Activated CD8-positive, alpha-beta T cell treated with anti-CD3 and anti-CD28 coated beads for 36 hours (primary cell): ENCODE measurements at regions of chr1 and their contacts with region 1.

Region 1: DNA sequence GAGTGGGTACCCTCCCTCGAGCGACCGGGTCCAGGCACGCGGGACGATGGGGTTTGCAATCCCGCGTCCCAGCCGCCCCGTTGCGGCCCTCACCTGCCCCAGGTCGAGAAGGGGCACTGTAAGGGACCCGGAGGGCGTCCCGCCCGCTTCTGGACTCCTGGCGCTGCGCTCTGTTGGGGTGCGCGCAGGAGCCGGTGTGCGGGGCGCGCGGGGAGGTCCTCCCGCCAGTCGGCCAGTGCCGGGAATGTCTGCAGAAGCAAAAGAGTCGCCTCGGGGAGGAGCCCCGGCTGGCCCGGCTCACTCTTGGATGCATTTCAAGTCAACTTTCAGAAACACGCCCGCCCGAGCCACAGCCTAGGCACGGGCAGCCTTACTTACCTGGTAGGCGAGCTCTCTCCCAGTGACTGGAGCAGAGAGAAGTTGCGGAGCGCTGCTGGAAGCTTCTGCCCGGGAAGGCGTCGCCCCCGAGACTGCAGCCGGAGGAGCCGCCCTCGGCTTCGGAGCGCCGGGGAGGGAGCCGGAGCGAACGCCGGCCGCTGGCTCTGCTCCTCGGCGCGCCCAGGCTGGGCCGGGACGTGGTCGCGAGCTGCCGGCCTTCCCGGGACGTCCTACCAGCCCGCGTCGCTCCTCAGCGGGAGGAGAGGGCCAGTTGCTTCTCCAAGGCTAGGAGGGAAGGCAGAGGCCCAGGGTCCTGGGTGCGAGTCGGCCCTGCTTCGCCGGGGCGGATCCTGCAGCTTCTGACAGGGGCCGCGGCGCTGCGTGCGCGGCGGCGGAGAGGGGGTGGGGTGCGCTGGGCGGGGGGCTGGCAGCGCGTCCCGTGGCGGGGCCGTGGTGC is at the start of gene LMX1A:
- DNase-seq: no peak
- ATAC-seq: no peak
- H3K4me3 Mint-ChIP-seq: no peak within 1 kb of the TSS
- H3K27ac Mint-ChIP-seq: no peak within 1 kb of the TSS
- H3K4me1 Mint-ChIP-seq: peaks cover 5% of the 10 kb centered on the region
- H3K27me3 Mint-ChIP-seq: peaks cover 74% of the 10 kb centered on the region
- CTCF ChIP-seq: no peak
- total RNA-seq, gene LMX1A: not detected

Region 2: DNA sequence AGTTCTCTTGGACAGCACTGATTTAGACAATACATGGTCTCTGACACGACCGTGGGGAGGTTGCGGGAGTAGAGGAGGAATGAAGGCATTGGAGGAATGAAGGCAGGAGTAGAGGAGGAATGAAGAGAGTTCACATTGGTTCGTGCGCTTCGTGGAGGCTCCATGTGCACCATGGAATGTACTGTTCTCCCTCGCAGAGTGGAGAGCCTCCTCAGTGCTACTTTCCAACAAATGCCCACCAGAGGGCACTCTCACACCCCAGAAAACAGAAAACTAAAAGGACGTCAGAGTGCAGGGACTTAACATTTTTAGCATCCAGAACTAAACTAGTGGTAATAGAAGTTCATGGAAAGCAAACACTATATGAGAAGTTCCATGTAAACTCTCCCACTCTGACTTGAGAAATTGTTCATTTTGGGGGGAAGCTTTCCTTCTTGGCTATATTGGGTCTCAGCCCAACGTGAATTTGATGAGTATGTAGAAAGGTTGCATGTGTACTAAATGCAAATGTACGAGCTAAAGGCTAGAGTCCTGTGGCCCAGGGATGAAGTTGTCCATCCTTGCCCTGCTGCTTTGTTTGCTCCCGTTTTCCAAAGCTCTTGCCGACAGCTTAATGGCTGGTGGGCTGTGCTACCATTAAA is 211.3 kb before region 1 on chr1:
- CTCF ChIA-PET with region 1: no interaction called
- POLR2A ChIA-PET with region 1: no interaction called
- intact Hi-C with region 1: loop called (anchors 10 kb)
- DNase-seq: peak; percentile 52
- ATAC-seq: peak; percentile 39
- H3K4me3 Mint-ChIP-seq: no peak overlapping the region
- H3K27ac Mint-ChIP-seq: no peak overlapping the region
- H3K4me1 Mint-ChIP-seq: no peaks in the 10 kb centered on the region
- H3K27me3 Mint-ChIP-seq: peaks cover 5% of the 10 kb centered on the region
- CTCF ChIP-seq: peak; percentile 69

Region 3: GRCh38 chr1:165235777-165236291 is 120.4 kb before region 1 on chr1:
- CTCF ChIA-PET with region 1: no interaction called
- POLR2A ChIA-PET with region 1: no interaction called
- intact Hi-C with region 1: loop called (anchors 10 kb)
- DNase-seq: no peak
- ATAC-seq: no peak
- H3K4me3 Mint-ChIP-seq: no peak overlapping the region
- H3K27ac Mint-ChIP-seq: no peak overlapping the region
- H3K4me1 Mint-ChIP-seq: no peaks in the 10 kb centered on the region
- H3K27me3 Mint-ChIP-seq: peaks cover 45% of the 10 kb centered on the region
- CTCF ChIP-seq: no peak